ENCODE measurements at regions of chr1 and their contacts with region 1.

Region 1: GRCh38 chr1:111222308-111223125 is 5.0 kb upstream of the CHI3L2 start:
- DNase-seq: peak; percentile 43 to 89 (median 80)
- ATAC-seq: peak; percentile 17
- H3K4me3 ChIP-seq: peak overlapping the region; percentile 38 to 42
- H3K4me3 Mint-ChIP-seq: peak overlapping the region; percentile 81
- H3K27ac ChIP-seq: peak overlapping the region; percentile 44 to 84
- H3K27ac Mint-ChIP-seq: peak overlapping the region; percentile 94
- H3K4me1 ChIP-seq: peaks cover 97% of the 10 kb centered on the region
- H3K4me1 Mint-ChIP-seq: peaks cover 91% of the 10 kb centered on the region
- H3K27me3 ChIP-seq: no peaks in the 10 kb centered on the region
- H3K27me3 Mint-ChIP-seq: no peaks in the 10 kb centered on the region
- CTCF ChIP-seq: peak; percentile 85

Region 2: GRCh38 chr1:110630839-110631663 is 591.5 kb before region 1 on chr1:
- CTCF ChIA-PET with region 1: no interaction called
- POLR2A ChIA-PET with region 1: no interaction called
- intact Hi-C with region 1: loop called in 1 of 2 experiments (anchors 10 kb)
- DNase-seq: peak; percentile 66 to 94 (median 85)
- ATAC-seq: peak; percentile 72
- H3K4me3 ChIP-seq: peak overlapping the region; percentile 27
- H3K4me3 Mint-ChIP-seq: no peak overlapping the region
- H3K27ac ChIP-seq: peak overlapping the region; percentile 28 to 55
- H3K27ac Mint-ChIP-seq: no peak overlapping the region
- H3K4me1 ChIP-seq: peaks cover 55% of the 10 kb centered on the region
- H3K4me1 Mint-ChIP-seq: peaks cover 46% of the 10 kb centered on the region
- H3K27me3 ChIP-seq: no peaks in the 10 kb centered on the region
- H3K27me3 Mint-ChIP-seq: no peaks in the 10 kb centered on the region
- CTCF ChIP-seq: peak; percentile 70

Region 3: GRCh38 chr1:110963691-110964399 is 258.7 kb before region 1 on chr1 and contains the start of gene LRIF1:
- CTCF ChIA-PET with region 1: no interaction called
- POLR2A ChIA-PET with region 1: no interaction called
- intact Hi-C with region 1: loop called in 1 of 2 experiments (anchors 5 kb)
- DNase-seq: peak; percentile 98 to 100 (median 100)
- ATAC-seq: peak; percentile 96
- H3K4me3 ChIP-seq: peak within 1 kb of the TSS; percentile 77 to 88
- H3K4me3 Mint-ChIP-seq: peak within 1 kb of the TSS; percentile 84
- H3K27ac ChIP-seq: peak within 1 kb of the TSS; percentile 98 to 99
- H3K27ac Mint-ChIP-seq: peak within 1 kb of the TSS; percentile 99
- H3K4me1 ChIP-seq: peaks cover 21% of the 10 kb centered on the region
- H3K4me1 Mint-ChIP-seq: peaks cover 33% of the 10 kb centered on the region
- H3K27me3 ChIP-seq: peaks cover 0 to 2% of the 10 kb centered on the region in 2 experiments
- H3K27me3 Mint-ChIP-seq: peaks cover 10% of the 10 kb centered on the region
- CTCF ChIP-seq: peak; percentile 59
- total RNA-seq, gene LRIF1: 1.8 to 1.9 TPM

Region 4: GRCh38 chr1:111183308-111184069 is 39.0 kb before region 1 on chr1:
- CTCF ChIA-PET with region 1: interaction called, 20 read pairs
- POLR2A ChIA-PET with region 1: interaction called, 38 read pairs
- intact Hi-C with region 1: loop called (anchors 5 kb)
- DNase-seq: no peak
- ATAC-seq: no peak
- H3K4me3 ChIP-seq: no peak overlapping the region
- H3K4me3 Mint-ChIP-seq: no peak overlapping the region
- H3K27ac ChIP-seq: peak overlapping the region in 1 of 2 experiments; percentile 38
- H3K27ac Mint-ChIP-seq: peak overlapping the region; percentile 64
- H3K4me1 ChIP-seq: peaks cover 63% of the 10 kb centered on the region
- H3K4me1 Mint-ChIP-seq: peaks cover 89% of the 10 kb centered on the region
- H3K27me3 ChIP-seq: no peaks in the 10 kb centered on the region
- H3K27me3 Mint-ChIP-seq: no peaks in the 10 kb centered on the region
- CTCF ChIP-seq: no peak

Region 5: DNA sequence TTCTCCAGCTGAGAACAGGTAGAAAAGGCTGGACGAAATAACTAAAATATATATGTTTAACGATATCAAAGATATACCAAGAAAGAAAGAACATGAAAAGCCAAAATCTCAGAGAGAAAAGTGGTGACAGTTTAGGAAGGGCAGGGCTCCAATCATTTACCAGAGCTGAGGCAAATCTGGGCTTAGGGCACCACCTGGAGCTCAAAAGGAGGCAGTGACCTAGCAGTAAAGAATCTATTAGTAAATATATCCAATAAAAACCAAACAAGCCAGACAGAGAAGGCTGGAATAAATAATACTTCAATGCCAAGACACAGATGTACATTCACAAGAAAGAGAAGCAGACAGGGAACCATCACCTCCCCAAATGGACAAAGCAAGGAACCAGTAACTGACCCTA is 111.7 kb after region 1 on chr1:
- CTCF ChIA-PET with region 1: interaction called, 34 read pairs
- POLR2A ChIA-PET with region 1: interaction called, 7 read pairs
- intact Hi-C with region 1: loop called (anchors 1 kb)
- DNase-seq: peak; percentile 19 to 82 (median 57)
- ATAC-seq: peak; percentile 87
- H3K4me3 ChIP-seq: no peak overlapping the region
- H3K4me3 Mint-ChIP-seq: no peak overlapping the region
- H3K27ac ChIP-seq: no peak overlapping the region
- H3K27ac Mint-ChIP-seq: no peak overlapping the region
- H3K4me1 ChIP-seq: no peaks in the 10 kb centered on the region
- H3K4me1 Mint-ChIP-seq: peaks cover 6% of the 10 kb centered on the region
- H3K27me3 ChIP-seq: no peaks in the 10 kb centered on the region
- H3K27me3 Mint-ChIP-seq: no peaks in the 10 kb centered on the region
- CTCF ChIP-seq: peak; percentile 73

Region 6: DNA sequence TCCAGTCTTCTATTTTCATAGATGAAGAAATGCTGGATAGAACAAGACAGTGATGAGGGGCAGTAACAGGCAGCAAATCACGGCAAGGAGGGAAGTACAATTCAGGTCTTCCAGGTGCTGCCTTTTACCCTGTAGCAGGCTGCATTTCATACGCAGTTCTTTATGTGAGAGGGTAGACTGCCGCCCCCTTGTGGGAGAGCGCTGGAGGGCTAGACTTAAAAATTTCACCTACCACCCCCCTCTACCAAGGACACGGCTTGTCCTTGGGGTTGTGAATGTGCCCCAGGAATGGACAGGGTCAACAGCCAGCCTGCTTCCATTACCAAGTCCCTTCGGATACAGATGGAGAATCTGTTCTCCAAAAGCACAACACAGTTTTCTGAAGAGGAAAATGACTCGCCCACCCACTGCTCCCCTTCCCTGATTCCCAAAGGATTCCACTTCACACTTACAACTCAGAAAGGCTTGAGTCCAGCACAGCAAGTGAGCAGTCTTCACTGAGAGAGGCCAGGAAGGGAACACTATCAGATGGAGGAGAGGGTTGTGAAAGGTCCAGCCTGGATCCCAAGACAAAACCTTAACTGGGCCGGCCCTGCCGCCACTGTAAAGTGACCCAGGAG is 219.2 kb after region 1 on chr1:
- CTCF ChIA-PET with region 1: interaction called, 25 read pairs
- POLR2A ChIA-PET with region 1: no interaction called
- intact Hi-C with region 1: loop called (anchors 1 kb)
- DNase-seq: peak; percentile 42 to 80 (median 71)
- ATAC-seq: peak; percentile 97
- H3K4me3 ChIP-seq: no peak overlapping the region
- H3K4me3 Mint-ChIP-seq: no peak overlapping the region
- H3K27ac ChIP-seq: no peak overlapping the region
- H3K27ac Mint-ChIP-seq: peak overlapping the region; percentile 80
- H3K4me1 ChIP-seq: peaks cover 16% of the 10 kb centered on the region
- H3K4me1 Mint-ChIP-seq: peaks cover 42% of the 10 kb centered on the region
- H3K27me3 ChIP-seq: no peaks in the 10 kb centered on the region
- H3K27me3 Mint-ChIP-seq: no peaks in the 10 kb centered on the region
- CTCF ChIP-seq: peak; percentile 57